ENCODE measurements at regions of chr19 and their contacts with region 1.

Region 1: DNA sequence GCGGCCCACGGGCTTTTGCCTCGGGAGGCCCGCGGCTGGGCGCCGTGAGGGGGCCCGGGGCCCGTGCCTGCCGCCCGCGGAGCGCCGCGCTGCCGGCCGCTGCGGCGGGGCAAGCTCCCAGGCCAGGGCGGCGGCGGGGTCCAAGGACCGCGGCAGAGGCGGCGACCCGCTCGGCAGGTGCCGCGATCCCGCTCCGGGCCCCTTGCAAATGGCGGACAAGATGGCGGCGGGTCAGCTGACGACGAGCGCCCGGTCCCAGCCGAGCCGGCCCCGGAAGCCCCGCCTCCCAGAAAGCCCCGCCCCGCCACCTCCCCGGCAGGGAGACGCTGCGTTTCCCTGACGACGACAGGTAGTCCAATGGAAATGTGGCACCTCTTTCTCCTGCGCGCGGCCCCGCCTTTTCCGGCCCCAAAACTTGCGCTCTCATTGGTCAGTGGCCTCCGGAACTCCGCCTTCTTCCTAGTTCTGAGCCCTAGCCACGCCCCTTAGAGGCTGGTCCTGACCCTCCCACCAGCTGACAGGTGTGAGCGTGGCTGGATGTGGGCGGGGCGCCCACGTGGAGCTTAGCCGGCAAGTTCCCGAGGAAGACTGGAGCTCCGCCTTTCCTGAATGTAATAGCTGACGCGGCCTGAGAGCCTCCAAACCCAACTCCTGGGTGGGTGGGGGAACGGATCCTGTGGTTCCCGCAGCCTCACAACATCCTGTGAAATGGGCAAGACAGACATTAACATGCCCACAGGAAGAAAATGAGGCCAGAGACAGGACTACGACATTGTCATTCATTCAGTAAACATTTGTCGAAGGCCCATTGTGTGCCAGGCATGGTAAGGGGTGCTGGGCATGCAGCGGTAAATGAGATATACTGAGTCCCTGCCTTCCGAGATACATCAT is at the start of gene AP3D1:
- DNase-seq: peak; percentile 100
- H3K4me3 ChIP-seq: peak within 1 kb of the TSS; percentile 97
- H3K27ac ChIP-seq: peak within 1 kb of the TSS; percentile 79
- H3K4me1 ChIP-seq: peaks cover 12% of the 10 kb centered on the region
- H3K27me3 ChIP-seq: no peaks in the 10 kb centered on the region
- CTCF ChIP-seq: no peak
- total RNA-seq, gene AP3D1: 105 to 137 TPM

Region 2: DNA sequence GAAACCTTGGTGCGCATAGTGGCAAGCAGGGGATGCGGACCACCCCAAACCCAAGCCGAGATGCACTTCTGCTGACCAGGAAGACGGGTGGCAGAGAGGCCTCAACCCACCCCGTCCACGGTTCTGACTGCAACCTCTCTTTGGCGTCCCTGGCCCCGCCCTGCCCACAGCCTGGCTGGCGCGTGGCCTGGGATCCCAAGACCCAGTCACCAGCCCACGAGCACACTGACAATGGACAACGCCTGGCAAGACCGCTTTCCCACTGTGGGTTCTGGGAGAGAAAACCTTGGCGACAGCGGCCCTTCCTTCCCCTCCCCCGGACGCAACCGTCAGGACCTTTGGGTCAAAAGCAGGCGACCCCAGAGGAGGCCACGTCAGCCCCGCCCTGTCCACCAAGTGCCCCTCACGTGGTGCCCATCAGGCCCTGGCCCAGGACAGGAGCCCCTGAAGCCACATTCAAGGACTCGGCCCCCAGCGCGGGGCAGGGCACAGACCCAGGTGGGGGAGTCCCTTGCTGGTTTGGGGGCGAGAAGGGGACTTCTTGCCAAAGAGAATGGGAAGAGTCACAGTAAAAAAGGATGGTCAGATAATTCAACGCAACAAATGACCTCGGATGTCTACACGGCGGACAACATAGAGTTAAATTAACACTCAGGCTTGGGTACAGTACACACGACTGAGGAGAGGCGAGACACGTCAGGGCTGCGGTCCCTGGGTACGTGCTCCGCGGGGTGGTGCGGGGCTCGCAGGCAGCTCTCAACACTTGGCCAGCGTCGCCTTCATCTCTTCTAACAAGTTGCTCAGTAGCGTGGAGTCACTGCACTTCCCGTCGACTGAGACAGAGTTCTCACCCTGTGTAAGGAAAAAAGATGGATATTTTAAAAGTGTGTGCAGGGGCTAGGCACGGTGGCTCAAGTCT is 49.9 kb before region 1 on chr19:
- intact Hi-C with region 1: loop called (anchors 5 kb)
- DNase-seq: no peak
- H3K4me3 ChIP-seq: no peak overlapping the region
- H3K27ac ChIP-seq: no peak overlapping the region
- H3K4me1 ChIP-seq: no peaks in the 10 kb centered on the region
- H3K27me3 ChIP-seq: no peaks in the 10 kb centered on the region
- CTCF ChIP-seq: no peak

Region 3: GRCh38 chr19:2385053-2385721 is 233.6 kb after region 1 on chr19:
- intact Hi-C with region 1: loop called (anchors 5 kb)
- DNase-seq: peak; percentile 66
- H3K4me3 ChIP-seq: no peak overlapping the region
- H3K27ac ChIP-seq: no peak overlapping the region
- H3K4me1 ChIP-seq: no peaks in the 10 kb centered on the region
- H3K27me3 ChIP-seq: no peaks in the 10 kb centered on the region
- CTCF ChIP-seq: no peak

Measured in colonic mucosa (tissue), 4 donors.